ENCODE measurements at regions of chr9 and their contacts with region 1.

Region 1: DNA sequence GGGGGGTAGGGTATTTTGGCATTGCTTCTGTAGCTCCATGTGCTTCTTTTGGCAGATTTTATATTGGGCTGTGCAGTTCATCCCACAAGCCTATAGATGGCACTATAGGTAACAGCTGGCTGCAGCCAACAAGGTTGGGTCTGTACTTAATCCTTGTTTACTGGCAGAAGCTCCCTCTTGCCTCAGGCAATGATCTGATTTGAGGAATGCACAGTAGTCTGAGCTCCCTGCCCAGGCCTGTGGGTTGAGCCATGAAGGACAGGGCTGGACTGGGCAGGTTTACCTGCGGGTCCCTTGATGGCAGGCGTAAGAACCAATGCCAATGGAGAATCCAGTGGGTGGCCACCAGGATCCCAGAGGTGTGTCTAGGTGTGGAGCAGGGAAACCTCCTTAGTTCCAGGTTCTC is 11.7 kb upstream of the OR1J2 start:
- DNase-seq: peak; percentile 39
- ATAC-seq: peak; percentile 88
- H3K4me3 Mint-ChIP-seq: no peak overlapping the region
- H3K27ac Mint-ChIP-seq: no peak overlapping the region
- H3K4me1 Mint-ChIP-seq: no peaks in the 10 kb centered on the region
- H3K27me3 Mint-ChIP-seq: peaks cover 22% of the 10 kb centered on the region
- CTCF ChIP-seq: peak; percentile 88

Region 2: GRCh38 chr9:122190609-122191381 is 308.1 kb before region 1 on chr9:
- CTCF ChIA-PET with region 1: no interaction called
- POLR2A ChIA-PET with region 1: no interaction called
- intact Hi-C with region 1: no loop called
- DNase-seq: peak; percentile 20
- ATAC-seq: peak; percentile 67
- H3K4me3 Mint-ChIP-seq: no peak overlapping the region
- H3K27ac Mint-ChIP-seq: no peak overlapping the region
- H3K4me1 Mint-ChIP-seq: no peaks in the 10 kb centered on the region
- H3K27me3 Mint-ChIP-seq: no peaks in the 10 kb centered on the region
- CTCF ChIP-seq: no peak

Region 3: DNA sequence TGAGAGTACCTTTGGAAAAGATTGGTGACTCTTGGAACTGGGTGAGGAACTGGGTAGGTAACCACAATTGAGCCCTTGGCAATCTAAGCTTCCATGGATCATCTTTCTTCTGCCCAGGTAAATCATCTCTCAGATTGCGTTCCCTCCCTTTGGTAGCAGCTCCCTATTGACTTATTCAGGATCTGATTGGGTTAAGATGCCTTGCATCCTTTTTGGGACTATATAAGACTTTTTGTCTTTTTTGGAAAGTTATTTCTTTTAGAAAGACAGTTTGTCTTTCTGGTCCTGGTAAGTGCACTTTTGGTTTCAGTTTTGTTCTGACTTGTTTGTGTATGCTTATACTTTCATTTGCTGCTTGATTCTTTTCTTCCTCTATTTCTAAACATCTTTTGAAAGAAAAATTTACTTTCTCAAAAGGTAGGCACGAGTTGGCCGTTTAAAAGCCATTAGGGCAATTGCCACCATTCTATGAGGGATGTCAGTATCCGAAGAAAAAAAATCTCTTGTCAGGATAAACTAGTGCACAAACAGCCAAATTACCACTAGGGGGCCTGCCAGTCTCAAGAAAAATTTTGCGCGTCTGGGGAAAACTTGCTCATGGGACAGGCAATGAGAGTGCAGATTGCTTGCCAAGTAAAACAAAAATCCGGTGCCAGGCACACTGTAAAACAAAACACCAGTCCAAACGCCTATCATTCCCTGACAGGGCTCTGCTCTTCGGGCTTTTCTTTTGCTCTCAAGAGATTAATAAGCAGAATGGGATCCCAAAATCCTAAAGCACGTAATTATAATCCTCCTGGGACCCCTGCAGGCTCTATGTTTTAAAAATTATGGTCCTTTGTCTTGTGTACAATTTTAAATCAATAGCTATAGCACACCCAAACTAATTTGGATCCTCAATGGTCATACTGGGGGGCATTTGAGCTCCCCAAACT is 34.0 kb before region 1 on chr9:
- CTCF ChIA-PET with region 1: interaction called, 10 read pairs
- POLR2A ChIA-PET with region 1: no interaction called
- intact Hi-C with region 1: no loop called
- DNase-seq: peak; percentile 79
- ATAC-seq: peak; percentile 79
- H3K4me3 Mint-ChIP-seq: peak overlapping the region; percentile 77
- H3K27ac Mint-ChIP-seq: peak overlapping the region; percentile 82
- H3K4me1 Mint-ChIP-seq: peaks cover 14% of the 10 kb centered on the region
- H3K27me3 Mint-ChIP-seq: peaks cover 27% of the 10 kb centered on the region
- CTCF ChIP-seq: peak; percentile 88

Region 4: GRCh38 chr9:122474561-122474960 is 24.3 kb before region 1 on chr9:
- CTCF ChIA-PET with region 1: interaction called, 10 read pairs
- POLR2A ChIA-PET with region 1: no interaction called
- intact Hi-C with region 1: no loop called
- DNase-seq: no peak
- ATAC-seq: no peak
- H3K4me3 Mint-ChIP-seq: no peak overlapping the region
- H3K27ac Mint-ChIP-seq: no peak overlapping the region
- H3K4me1 Mint-ChIP-seq: no peaks in the 10 kb centered on the region
- H3K27me3 Mint-ChIP-seq: peaks cover 24% of the 10 kb centered on the region
- CTCF ChIP-seq: no peak

Region 5: DNA sequence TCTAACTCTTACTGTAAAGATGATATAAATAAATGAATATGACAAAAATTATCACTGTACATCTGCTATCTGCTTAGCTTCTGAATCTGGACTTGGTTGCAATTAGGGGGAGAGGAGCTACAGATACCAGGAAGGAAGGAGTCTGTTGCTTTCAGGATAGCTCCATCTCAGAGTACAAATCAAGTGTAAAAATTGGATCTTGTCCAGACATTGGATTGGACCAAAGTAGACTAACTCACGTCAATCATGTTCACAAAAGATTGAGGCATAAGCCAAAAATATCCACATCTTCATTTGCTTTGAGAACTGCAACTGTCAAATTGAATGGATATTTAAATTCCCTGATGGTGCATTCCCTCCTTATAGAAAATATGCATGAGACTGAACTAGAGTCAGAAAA is 106.8 kb after region 1 on chr9:
- CTCF ChIA-PET with region 1: no interaction called
- POLR2A ChIA-PET with region 1: no interaction called
- intact Hi-C with region 1: no loop called
- DNase-seq: no peak
- ATAC-seq: no peak
- H3K4me3 Mint-ChIP-seq: no peak overlapping the region
- H3K27ac Mint-ChIP-seq: no peak overlapping the region
- H3K4me1 Mint-ChIP-seq: no peaks in the 10 kb centered on the region
- H3K27me3 Mint-ChIP-seq: peaks cover 3% of the 10 kb centered on the region
- CTCF ChIP-seq: no peak

Region 6: GRCh38 chr9:122810306-122810946 is 311.5 kb after region 1 on chr9:
- CTCF ChIA-PET with region 1: interaction called, 43 read pairs
- POLR2A ChIA-PET with region 1: no interaction called
- intact Hi-C with region 1: loop called (anchors 10 kb)
- DNase-seq: peak; percentile 83
- ATAC-seq: peak; percentile 77
- H3K4me3 Mint-ChIP-seq: no peak overlapping the region
- H3K27ac Mint-ChIP-seq: no peak overlapping the region
- H3K4me1 Mint-ChIP-seq: peaks cover 31% of the 10 kb centered on the region
- H3K27me3 Mint-ChIP-seq: no peaks in the 10 kb centered on the region
- CTCF ChIP-seq: peak; percentile 89

Region 7: DNA sequence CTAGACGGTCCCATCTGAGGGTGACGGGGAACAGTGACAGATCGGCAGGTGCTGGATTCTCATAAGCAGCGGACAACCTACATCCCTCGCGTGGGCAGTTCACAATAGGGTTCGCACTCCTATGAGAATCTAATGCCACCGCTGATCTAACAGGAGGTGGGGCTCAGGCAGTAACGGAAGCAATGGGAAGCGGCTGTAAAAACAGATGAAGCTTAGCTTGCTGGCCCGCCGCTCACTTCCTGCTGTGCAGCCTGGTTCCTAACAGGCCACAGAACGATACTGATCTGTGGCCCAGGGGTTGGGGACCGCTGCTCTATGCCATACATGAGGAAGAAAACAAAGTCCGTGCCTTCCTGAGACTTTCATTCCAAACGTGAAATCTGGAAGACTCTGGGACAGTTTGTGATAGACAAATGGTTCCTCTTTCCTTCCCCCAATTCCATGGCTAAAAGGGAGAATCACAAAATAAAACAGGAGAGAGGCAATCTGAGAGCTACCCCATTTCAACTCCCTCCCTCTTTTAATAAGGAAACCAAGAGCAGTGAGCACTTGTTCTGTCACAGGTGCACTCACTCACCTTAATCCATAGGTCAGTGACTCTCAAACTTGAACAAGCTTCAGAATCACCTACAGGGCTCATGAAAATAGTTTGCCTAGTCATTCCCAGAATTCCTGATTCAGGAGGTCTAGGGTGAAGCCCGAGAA is 317.4 kb after region 1 on chr9:
- CTCF ChIA-PET with region 1: interaction called, 43 read pairs
- POLR2A ChIA-PET with region 1: no interaction called
- intact Hi-C with region 1: loop called (anchors 10 kb)
- DNase-seq: peak; percentile 65
- ATAC-seq: peak; percentile 87
- H3K4me3 Mint-ChIP-seq: peak overlapping the region; percentile 40
- H3K27ac Mint-ChIP-seq: peak overlapping the region; percentile 89
- H3K4me1 Mint-ChIP-seq: peaks cover 35% of the 10 kb centered on the region
- H3K27me3 Mint-ChIP-seq: no peaks in the 10 kb centered on the region
- CTCF ChIP-seq: no peak